GM12878 (cell line): ENCODE measurements at regions of chrX and their contacts with region 1.

Region 1: DNA sequence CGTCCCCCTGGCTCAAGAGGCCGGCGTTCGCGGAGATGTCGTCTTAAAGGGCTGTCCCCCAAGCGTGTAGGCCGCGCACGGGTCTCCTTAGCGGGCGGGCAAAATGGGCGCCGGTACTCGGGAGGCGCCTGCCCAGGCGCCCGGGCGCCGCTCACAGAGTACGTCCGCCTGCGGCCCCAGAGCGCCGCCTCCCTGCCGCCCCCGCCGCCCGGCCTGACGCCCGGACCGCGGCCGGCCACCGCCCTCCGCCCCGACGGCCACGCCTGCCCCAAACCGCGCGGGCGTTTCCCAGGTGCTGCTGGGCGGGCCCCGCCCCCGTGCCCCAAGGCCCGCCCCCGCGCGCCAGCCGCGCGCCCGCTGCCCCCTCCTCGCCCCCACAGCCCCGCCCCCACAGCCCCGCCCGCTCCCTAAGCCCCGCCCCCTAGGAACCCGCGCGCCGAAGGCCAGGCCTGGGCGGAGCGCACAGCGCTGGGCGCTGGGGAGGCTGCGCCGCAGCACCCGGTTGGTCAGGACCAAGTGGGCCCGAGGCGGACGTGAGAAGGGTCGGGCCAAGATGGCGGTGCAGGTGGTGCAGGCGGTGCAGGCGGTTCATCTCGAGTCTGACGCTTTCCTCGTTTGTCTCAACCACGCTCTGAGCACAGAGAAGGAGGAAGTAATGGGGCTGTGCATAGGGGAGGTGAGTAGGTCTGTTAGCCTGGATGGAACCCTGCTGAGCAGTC is at the starts of genes BRCC3, CMC4 and MTCP1:
- DNase-seq: peak; percentile 35
- ATAC-seq: peak; percentile 92
- H3K4me3 ChIP-seq: peak within 1 kb of the TSS; percentile 83
- H3K27ac ChIP-seq: peak within 1 kb of the TSS; percentile 84
- H3K4me1 ChIP-seq: no peaks in the 10 kb centered on the region
- H3K27me3 ChIP-seq: no peaks in the 10 kb centered on the region
- CTCF ChIP-seq: no peak
- EP300 ChIP-seq: no peak
- POLR2A ChIP-seq: peak; percentile 97
- RAD21 ChIP-seq: no peak
- polyA plus RNA-seq, gene BRCC3: 29.5 to 40.6 TPM
- polyA plus RNA-seq, gene CMC4: 5.8 to 10.4 TPM
- polyA plus RNA-seq, gene MTCP1: 30.2 to 52.9 TPM

Region 2: DNA sequence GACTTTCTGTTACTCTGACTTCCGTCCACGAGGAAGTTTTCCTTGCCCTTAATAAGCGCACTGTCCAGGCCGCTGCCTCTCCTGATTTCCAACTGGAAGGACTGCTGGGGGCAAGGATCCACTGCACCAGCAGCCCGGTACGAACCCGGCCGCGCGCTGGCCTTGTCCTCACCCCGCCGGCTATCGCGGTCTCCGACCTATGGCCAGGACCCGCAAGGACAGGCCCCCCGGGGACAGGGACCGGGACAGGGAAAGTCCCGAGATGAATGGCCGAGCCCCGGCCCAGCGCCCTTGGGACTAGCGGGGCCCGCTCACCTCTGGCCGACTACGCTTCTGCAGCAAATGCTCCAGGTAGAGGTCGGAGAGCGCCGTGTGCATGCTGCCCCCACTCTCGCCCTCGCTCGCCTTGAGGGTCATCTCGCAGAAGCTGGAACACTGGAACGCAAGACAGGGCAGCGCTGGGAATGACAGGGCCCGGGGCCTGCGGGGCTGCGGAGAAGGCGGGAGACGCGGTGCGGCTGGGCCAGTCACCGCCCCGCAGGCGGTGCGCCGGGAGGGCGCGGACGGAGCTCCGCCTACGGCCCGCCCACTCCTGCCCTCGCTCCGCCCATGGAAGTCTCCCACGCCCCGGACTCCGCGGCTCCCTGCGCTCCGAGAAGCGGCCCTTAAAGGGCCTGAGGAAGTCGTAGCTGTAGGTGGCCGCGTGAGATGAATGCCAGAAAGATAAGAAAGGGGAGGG is 266.0 kb before region 1 on chrX and contains the start of gene MPP1:
- CTCF ChIA-PET with region 1: no interaction called
- POLR2A ChIA-PET with region 1: no interaction called
- RAD21 ChIA-PET with region 1: no interaction called
- SMC1A ChIA-PET with region 1: no interaction called
- in situ Hi-C with region 1: no loop called
- intact Hi-C with region 1: no loop called
- DNase-seq: peak; percentile 36
- ATAC-seq: peak; percentile 99
- H3K4me3 ChIP-seq: peak within 1 kb of the TSS; percentile 70
- H3K27ac ChIP-seq: no peak within 1 kb of the TSS
- H3K4me1 ChIP-seq: no peaks in the 10 kb centered on the region
- H3K27me3 ChIP-seq: no peaks in the 10 kb centered on the region
- CTCF ChIP-seq: no peak
- EP300 ChIP-seq: no peak
- POLR2A ChIP-seq: peak; percentile 57
- RAD21 ChIP-seq: no peak
- polyA plus RNA-seq, gene MPP1: 11.9 to 17.9 TPM

Region 3: GRCh38 chrX:155026726-155027508 is 44.2 kb before region 1 on chrX and contains the start of gene FUNDC2:
- CTCF ChIA-PET with region 1: interaction called, 3 read pairs
- POLR2A ChIA-PET with region 1: interaction called, 3 read pairs
- RAD21 ChIA-PET with region 1: interaction called, 3 read pairs
- SMC1A ChIA-PET with region 1: interaction called, 4 read pairs
- in situ Hi-C with region 1: no loop called
- intact Hi-C with region 1: loop called (anchors 5 kb)
- DNase-seq: peak; percentile 80
- ATAC-seq: peak; percentile 87
- H3K4me3 ChIP-seq: peak within 1 kb of the TSS; percentile 70
- H3K27ac ChIP-seq: peak within 1 kb of the TSS; percentile 94
- H3K4me1 ChIP-seq: no peaks in the 10 kb centered on the region
- H3K27me3 ChIP-seq: no peaks in the 10 kb centered on the region
- CTCF ChIP-seq: no peak
- EP300 ChIP-seq: no peak
- POLR2A ChIP-seq: peak; percentile 88
- RAD21 ChIP-seq: no peak
- polyA plus RNA-seq, gene FUNDC2: 232 to 285 TPM

Region 4: GRCh38 chrX:155056877-155057792 is 14.0 kb before region 1 on chrX:
- CTCF ChIA-PET with region 1: interaction called, 11 read pairs
- POLR2A ChIA-PET with region 1: no interaction called
- RAD21 ChIA-PET with region 1: no interaction called
- SMC1A ChIA-PET with region 1: interaction called, 10 read pairs
- in situ Hi-C with region 1: no loop called
- intact Hi-C with region 1: no loop called
- DNase-seq: peak; percentile 24
- ATAC-seq: peak; percentile 95
- H3K4me3 ChIP-seq: peak overlapping the region; percentile 24; the same call in 1 of the 2 replicates
- H3K27ac ChIP-seq: no peak overlapping the region; the same call in 1 of the 2 replicates
- H3K4me1 ChIP-seq: no peaks in the 10 kb centered on the region; the same call in 1 of the 2 replicates
- H3K27me3 ChIP-seq: no peaks in the 10 kb centered on the region
- CTCF ChIP-seq: peak; percentile 69 to 77 (median 73)
- EP300 ChIP-seq: no peak
- POLR2A ChIP-seq: no peak
- RAD21 ChIP-seq: peak; percentile 63

Region 5: GRCh38 chrX:155086202-155086840 is 15.2 kb after region 1 on chrX:
- CTCF ChIA-PET with region 1: interaction called, 10 read pairs
- POLR2A ChIA-PET with region 1: no interaction called
- RAD21 ChIA-PET with region 1: no interaction called
- SMC1A ChIA-PET with region 1: no interaction called
- in situ Hi-C with region 1: no loop called
- intact Hi-C with region 1: no loop called
- DNase-seq: no peak
- ATAC-seq: peak; percentile 80
- H3K4me3 ChIP-seq: no peak overlapping the region
- H3K27ac ChIP-seq: no peak overlapping the region
- H3K4me1 ChIP-seq: no peaks in the 10 kb centered on the region
- H3K27me3 ChIP-seq: no peaks in the 10 kb centered on the region
- CTCF ChIP-seq: peak; percentile 37 to 56 (median 44); a peak in 4 of 6 replicates
- EP300 ChIP-seq: no peak
- POLR2A ChIP-seq: no peak
- RAD21 ChIP-seq: peak; percentile 45; the same call in 1 of the 2 replicates

Region 6: DNA sequence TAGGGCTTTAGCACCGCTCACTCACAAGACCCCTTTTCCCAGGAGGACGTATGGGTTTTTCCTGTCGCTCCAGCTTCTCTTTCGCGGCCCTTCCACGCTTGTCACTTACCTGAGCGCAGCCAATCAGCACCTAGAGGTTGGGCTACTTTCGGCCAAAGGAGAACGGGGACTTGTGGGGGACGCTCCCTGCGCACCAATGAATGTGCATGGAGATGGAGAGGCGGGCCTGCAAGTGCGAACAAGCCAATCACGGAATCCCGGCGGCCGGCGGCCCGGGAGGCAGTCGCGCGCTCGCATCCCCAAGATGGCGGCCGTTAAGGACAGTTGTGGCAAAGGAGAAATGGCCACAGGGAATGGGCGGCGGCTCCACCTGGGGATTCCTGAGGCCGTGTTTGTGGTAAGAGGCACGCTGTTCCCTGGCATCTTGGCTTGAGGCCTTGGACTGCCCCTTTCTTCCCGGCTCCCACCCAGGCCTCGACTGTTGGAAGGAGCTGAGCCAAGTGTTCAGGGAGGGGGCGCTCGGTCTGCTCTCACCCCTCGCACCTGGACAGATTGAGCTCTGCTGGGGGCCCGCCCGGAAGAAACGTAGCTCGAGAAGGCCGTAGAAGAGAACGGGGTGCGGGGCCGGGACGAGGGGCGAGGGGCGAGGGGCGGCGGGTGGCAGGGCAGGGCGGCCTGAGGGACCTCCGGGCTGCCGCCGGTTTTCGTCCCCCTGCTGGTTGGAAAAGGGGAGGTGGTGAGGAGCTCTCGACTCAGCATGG is 145.2 kb after region 1 on chrX and contains the start of gene VBP1:
- CTCF ChIA-PET with region 1: no interaction called
- POLR2A ChIA-PET with region 1: no interaction called
- RAD21 ChIA-PET with region 1: interaction called, 3 read pairs
- SMC1A ChIA-PET with region 1: no interaction called
- in situ Hi-C with region 1: no loop called
- intact Hi-C with region 1: loop called (anchors 5 kb)
- DNase-seq: peak; percentile 84
- ATAC-seq: peak; percentile 97
- H3K4me3 ChIP-seq: peak within 1 kb of the TSS; percentile 67
- H3K27ac ChIP-seq: peak within 1 kb of the TSS; percentile 82
- H3K4me1 ChIP-seq: no peaks in the 10 kb centered on the region
- H3K27me3 ChIP-seq: no peaks in the 10 kb centered on the region
- CTCF ChIP-seq: peak in 2 of 3 experiments; percentile 25 to 31; a peak in 3 of 6 replicates
- EP300 ChIP-seq: no peak
- POLR2A ChIP-seq: peak; percentile 88
- RAD21 ChIP-seq: no peak
- polyA plus RNA-seq, gene VBP1: 140 to 182 TPM